GM12878 (cell line): ENCODE measurements at regions of chr1 and their contacts with region 1.

Region 1: DNA sequence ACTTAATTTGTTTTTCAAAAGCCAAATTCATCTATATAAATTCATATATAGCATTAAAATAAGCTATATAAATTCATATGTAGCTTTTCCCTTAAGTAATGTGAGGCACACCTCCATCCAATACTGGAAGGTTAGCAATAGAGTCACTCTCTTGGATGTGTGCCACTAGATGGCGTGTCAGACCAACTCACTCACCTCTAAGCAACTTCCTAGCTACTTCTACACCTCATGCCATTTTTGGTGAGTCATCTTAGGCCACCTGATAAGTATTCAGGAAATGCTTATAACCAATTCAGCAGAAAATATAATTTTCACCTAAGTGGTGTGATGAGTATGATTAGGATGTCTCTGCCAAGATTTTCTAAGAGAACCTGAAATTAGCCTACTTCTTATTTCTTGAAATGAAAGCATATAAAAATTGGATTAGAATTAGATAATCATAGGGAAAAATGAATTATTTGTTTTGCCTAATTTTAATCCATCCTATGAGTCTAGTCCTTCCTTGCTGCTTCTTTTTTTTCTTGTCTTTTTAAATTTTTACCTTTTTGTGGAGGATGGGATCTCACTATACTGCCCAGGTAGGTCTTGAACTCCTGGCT is 34.4 kb upstream of the TADA1 start:
- DNase-seq: peak; percentile 70
- ATAC-seq: peak; percentile 99
- H3K4me3 ChIP-seq: no peak overlapping the region
- H3K27ac ChIP-seq: no peak overlapping the region
- H3K4me1 ChIP-seq: peaks cover 5% of the 10 kb centered on the region; the same call in 1 of the 2 replicates
- H3K27me3 ChIP-seq: no peaks in the 10 kb centered on the region
- CTCF ChIP-seq: peak; percentile 81 to 92 (median 85)
- EP300 ChIP-seq: no peak
- POLR2A ChIP-seq: no peak
- RAD21 ChIP-seq: peak; percentile 94

Region 2: DNA sequence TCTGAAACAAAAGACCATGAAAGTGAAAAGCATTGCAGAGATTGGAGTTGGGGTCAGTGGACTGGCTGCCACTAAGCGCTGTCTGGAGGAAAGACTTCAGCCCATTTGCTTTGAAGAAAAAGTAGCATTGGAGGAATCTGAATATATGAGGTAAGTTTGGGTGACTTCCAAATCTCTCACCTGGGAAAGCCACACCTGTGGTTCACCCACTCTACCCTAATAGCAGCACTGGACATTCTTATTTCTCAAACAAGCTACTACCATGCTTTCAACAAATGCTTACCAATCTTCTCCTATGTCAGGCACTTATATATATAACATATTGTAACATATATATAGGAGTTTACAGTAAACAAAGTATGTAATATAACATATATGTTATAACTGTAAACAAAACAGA is 147.2 kb before region 1 on chr1:
- CTCF ChIA-PET with region 1: no interaction called
- POLR2A ChIA-PET with region 1: no interaction called
- RAD21 ChIA-PET with region 1: no interaction called
- SMC1A ChIA-PET with region 1: no interaction called
- in situ Hi-C with region 1: no loop called
- intact Hi-C with region 1: no loop called
- DNase-seq: no peak
- ATAC-seq: no peak
- H3K4me3 ChIP-seq: no peak overlapping the region
- H3K27ac ChIP-seq: no peak overlapping the region
- H3K4me1 ChIP-seq: no peaks in the 10 kb centered on the region
- H3K27me3 ChIP-seq: no peaks in the 10 kb centered on the region
- CTCF ChIP-seq: no peak
- EP300 ChIP-seq: no peak
- POLR2A ChIP-seq: no peak
- RAD21 ChIP-seq: no peak

Region 3: GRCh38 chr1:166895793-166896192 is 14.7 kb before region 1 on chr1:
- CTCF ChIA-PET with region 1: interaction called, 17 read pairs
- POLR2A ChIA-PET with region 1: no interaction called
- RAD21 ChIA-PET with region 1: no interaction called
- SMC1A ChIA-PET with region 1: interaction called, 13 read pairs
- in situ Hi-C with region 1: no loop called
- intact Hi-C with region 1: no loop called
- DNase-seq: no peak
- ATAC-seq: no peak
- H3K4me3 ChIP-seq: no peak overlapping the region
- H3K27ac ChIP-seq: no peak overlapping the region
- H3K4me1 ChIP-seq: no peaks in the 10 kb centered on the region
- H3K27me3 ChIP-seq: no peaks in the 10 kb centered on the region; a peak in 2 of 4 replicates
- CTCF ChIP-seq: no peak
- EP300 ChIP-seq: no peak
- POLR2A ChIP-seq: no peak
- RAD21 ChIP-seq: no peak

Region 4: GRCh38 chr1:166929911-166930310 is 19.4 kb after region 1 on chr1:
- CTCF ChIA-PET with region 1: interaction called, 26 read pairs
- POLR2A ChIA-PET with region 1: interaction called, 3 read pairs
- RAD21 ChIA-PET with region 1: interaction called, 4 read pairs
- SMC1A ChIA-PET with region 1: interaction called, 24 read pairs
- in situ Hi-C with region 1: no loop called
- intact Hi-C with region 1: no loop called
- DNase-seq: no peak
- ATAC-seq: no peak
- H3K4me3 ChIP-seq: no peak overlapping the region
- H3K27ac ChIP-seq: no peak overlapping the region
- H3K4me1 ChIP-seq: peaks cover 6% of the 10 kb centered on the region; the same call in 1 of the 2 replicates
- H3K27me3 ChIP-seq: no peaks in the 10 kb centered on the region
- CTCF ChIP-seq: no peak
- EP300 ChIP-seq: no peak
- POLR2A ChIP-seq: no peak
- RAD21 ChIP-seq: no peak

Region 5: GRCh38 chr1:167052389-167052788 is 141.9 kb after region 1 on chr1:
- CTCF ChIA-PET with region 1: interaction called, 734 read pairs
- POLR2A ChIA-PET with region 1: interaction called, 3 read pairs
- RAD21 ChIA-PET with region 1: interaction called, 305 read pairs
- SMC1A ChIA-PET with region 1: interaction called, 384 read pairs
- in situ Hi-C with region 1: loop called (anchors 5 kb)
- intact Hi-C with region 1: no loop called
- DNase-seq: no peak
- ATAC-seq: peak; percentile 38; the same call in 2 of the 3 replicates
- H3K4me3 ChIP-seq: no peak overlapping the region
- H3K27ac ChIP-seq: no peak overlapping the region
- H3K4me1 ChIP-seq: no peaks in the 10 kb centered on the region
- H3K27me3 ChIP-seq: no peaks in the 10 kb centered on the region
- CTCF ChIP-seq: peak in 2 of 3 experiments; percentile 26 to 45; a peak in 2 of 6 replicates
- EP300 ChIP-seq: no peak
- POLR2A ChIP-seq: no peak
- RAD21 ChIP-seq: no peak

Region 6: GRCh38 chr1:167066333-167067122 is 156.0 kb after region 1 on chr1:
- CTCF ChIA-PET with region 1: interaction called, 734 read pairs
- POLR2A ChIA-PET with region 1: no interaction called
- RAD21 ChIA-PET with region 1: interaction called, 305 read pairs
- SMC1A ChIA-PET with region 1: interaction called, 384 read pairs
- in situ Hi-C with region 1: no loop called
- intact Hi-C with region 1: no loop called
- DNase-seq: no peak
- ATAC-seq: peak; percentile 97
- H3K4me3 ChIP-seq: peak overlapping the region; percentile 70; the same call in 1 of the 2 replicates
- H3K27ac ChIP-seq: no peak overlapping the region
- H3K4me1 ChIP-seq: no peaks in the 10 kb centered on the region
- H3K27me3 ChIP-seq: no peaks in the 10 kb centered on the region; a peak in 1 of 4 replicates
- CTCF ChIP-seq: peak; percentile 92 to 98 (median 97); a peak in 5 of 6 replicates
- EP300 ChIP-seq: no peak
- POLR2A ChIP-seq: no peak
- RAD21 ChIP-seq: peak; percentile 87

Region 7: GRCh38 chr1:167128261-167129227 is 218.0 kb after region 1 on chr1:
- CTCF ChIA-PET with region 1: interaction called, 16 read pairs
- POLR2A ChIA-PET with region 1: no interaction called
- RAD21 ChIA-PET with region 1: no interaction called
- SMC1A ChIA-PET with region 1: interaction called, 5 read pairs
- in situ Hi-C with region 1: no loop called
- intact Hi-C with region 1: loop called (anchors 5 kb)
- DNase-seq: no peak
- ATAC-seq: 0 out of 3 replicates have a peak, but pooled peaks have one; percentile 28
- H3K4me3 ChIP-seq: no peak overlapping the region
- H3K27ac ChIP-seq: no peak overlapping the region
- H3K4me1 ChIP-seq: no peaks in the 10 kb centered on the region
- H3K27me3 ChIP-seq: peaks cover 7% of the 10 kb centered on the region in 2 experiments; a peak in 2 of 4 replicates
- CTCF ChIP-seq: peak in 1 of 3 experiments; percentile 26; a peak in 1 of 6 replicates
- EP300 ChIP-seq: no peak
- POLR2A ChIP-seq: no peak
- RAD21 ChIP-seq: peak; percentile 58